Gastrocnemius medialis (tissue), 4 donors: ENCODE measurements at regions of chr4 and their contacts with region 1.

Region 1: GRCh38 chr4:101347557-101348366 is 436 bp upstream of the PPP3CA start:
- DNase-seq: peak; percentile 99
- ATAC-seq: peak; percentile 75 to 84
- H3K4me3 ChIP-seq: peak overlapping the region; percentile 82 to 96 (median 90)
- H3K27ac ChIP-seq: peak overlapping the region; percentile 95 to 100 (median 96)
- H3K4me1 ChIP-seq: peaks cover 31 to 40% of the 10 kb centered on the region in 2 donors
- H3K27me3 ChIP-seq: no peaks in the 10 kb centered on the region
- CTCF ChIP-seq: peak in 3 of 5 experiments; percentile 10 to 32 (median 13)
- POLR2A ChIP-seq: peak; percentile 63 to 77

Region 2: DNA sequence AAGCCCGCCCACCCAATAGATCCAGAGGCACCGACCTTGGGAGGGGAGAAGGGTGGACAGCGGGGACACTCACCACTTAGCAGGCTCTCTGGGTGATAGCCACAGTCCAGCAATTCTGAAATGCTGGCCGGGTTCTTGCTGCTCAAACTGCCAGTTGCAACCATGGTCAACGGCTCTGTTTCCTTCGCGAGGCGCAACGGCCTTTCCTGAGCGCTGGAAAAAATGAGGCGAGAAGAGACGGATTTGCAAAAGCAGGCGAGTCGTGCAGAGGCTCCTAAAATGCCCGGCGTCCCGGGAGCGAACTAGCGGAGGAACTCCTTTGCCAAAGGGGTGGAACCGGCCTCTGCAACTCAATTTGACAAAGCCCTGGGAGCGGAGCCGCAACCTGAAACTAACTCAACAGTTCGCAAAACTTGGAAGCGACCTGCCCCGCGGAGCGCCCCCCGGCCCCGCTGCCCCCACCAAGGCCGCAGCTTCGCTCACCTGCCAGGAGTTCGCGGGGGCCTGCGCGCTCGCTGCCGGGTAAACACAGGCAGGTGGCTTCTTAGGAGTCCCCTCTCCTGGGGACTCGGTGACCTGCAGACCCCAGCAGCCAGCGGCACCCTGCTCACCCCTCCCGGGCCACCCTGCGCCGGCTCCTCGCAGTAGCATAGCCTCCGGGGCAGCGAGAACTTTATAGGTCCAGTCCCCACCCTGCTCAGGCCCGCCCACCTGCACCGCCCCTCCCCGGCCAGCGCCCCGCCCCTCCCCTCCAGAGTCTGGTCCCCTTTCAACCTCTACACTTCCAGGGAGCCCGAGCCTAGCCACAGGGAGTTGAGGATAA is 1157.7 kb before region 1 on chr4 and contains the start of gene DDIT4L:
- in situ Hi-C with region 1: no loop called
- intact Hi-C with region 1: loop called (anchors 10 kb)
- DNase-seq: peak; percentile 78 to 83
- ATAC-seq: peak; percentile 60 to 67
- H3K4me3 ChIP-seq: peak within 1 kb of the TSS; percentile 78 to 95 (median 84)
- H3K27ac ChIP-seq: peak within 1 kb of the TSS; percentile 93 to 97 (median 96)
- H3K4me1 ChIP-seq: peaks cover 15 to 24% of the 10 kb centered on the region in 2 donors
- H3K27me3 ChIP-seq: no peaks in the 10 kb centered on the region
- CTCF ChIP-seq: peak in 1 of 5 experiments; percentile 1
- POLR2A ChIP-seq: peak; percentile 91 to 96
- total RNA-seq, gene DDIT4L: 41.8 to 99.7 (median 69.9) TPM

Region 3: DNA sequence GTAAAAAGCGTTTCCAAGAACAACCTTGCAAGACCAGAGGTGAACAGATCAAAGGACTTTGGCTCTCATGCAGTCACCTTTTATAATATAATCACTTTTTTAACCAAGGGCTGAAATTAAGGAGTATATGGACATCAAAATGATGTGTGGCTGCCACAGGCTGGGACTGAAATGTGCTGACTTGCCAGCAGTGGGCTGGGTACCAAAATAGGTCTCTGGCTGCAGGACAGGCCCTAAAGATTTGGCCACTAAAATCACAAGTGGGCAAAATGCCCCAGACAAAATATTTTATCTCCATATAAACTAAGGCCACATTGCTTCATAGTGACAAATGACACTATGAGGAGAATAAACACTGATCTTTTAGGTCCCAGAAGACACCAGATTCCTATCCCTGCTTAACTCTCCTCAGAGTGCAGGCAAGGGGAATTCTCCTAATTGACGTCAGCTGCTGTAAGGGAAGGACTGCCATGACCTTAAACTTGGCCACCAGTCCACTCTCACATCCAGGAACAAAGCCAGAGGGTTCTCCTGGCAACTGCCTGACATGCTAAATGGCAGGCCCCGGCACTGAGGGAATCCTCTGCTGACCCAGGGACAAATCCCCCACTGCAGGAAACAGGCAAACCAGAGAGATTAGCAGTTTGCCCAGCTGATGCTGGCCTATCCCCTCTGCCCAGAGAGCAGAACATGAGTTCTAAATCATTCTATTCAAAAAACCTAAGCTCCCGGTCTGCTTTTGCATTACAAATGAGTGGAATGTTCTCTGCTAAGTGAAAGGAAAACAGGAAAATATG is 156.3 kb before region 1 on chr4:
- in situ Hi-C with region 1: loop called in 1 of 4 experiments (anchors 25 kb)
- intact Hi-C with region 1: loop called (anchors 5 kb)
- DNase-seq: peak; percentile 60 to 83
- ATAC-seq: peak; percentile 97 to 99
- H3K4me3 ChIP-seq: no peak overlapping the region
- H3K27ac ChIP-seq: peak overlapping the region; percentile 65 to 78 (median 70)
- H3K4me1 ChIP-seq: peaks cover 53 to 55% of the 10 kb centered on the region in 2 donors
- H3K27me3 ChIP-seq: no peaks in the 10 kb centered on the region
- CTCF ChIP-seq: no peak
- POLR2A ChIP-seq: no peak

Region 4: GRCh38 chr4:101232074-101232776 is 115.5 kb before region 1 on chr4:
- in situ Hi-C with region 1: no loop called
- intact Hi-C with region 1: loop called (anchors 10 kb)
- DNase-seq: peak; percentile 6 to 45
- ATAC-seq: peak; percentile 91 to 97
- H3K4me3 ChIP-seq: no peak overlapping the region
- H3K27ac ChIP-seq: peak overlapping the region in 2 of 4 donors; percentile 41 to 42
- H3K4me1 ChIP-seq: peaks cover 17 to 20% of the 10 kb centered on the region in 2 donors
- H3K27me3 ChIP-seq: no peaks in the 10 kb centered on the region
- CTCF ChIP-seq: no peak
- POLR2A ChIP-seq: no peak